ENCODE measurements at regions of chr15 and their contacts with region 1.

Region 1: DNA sequence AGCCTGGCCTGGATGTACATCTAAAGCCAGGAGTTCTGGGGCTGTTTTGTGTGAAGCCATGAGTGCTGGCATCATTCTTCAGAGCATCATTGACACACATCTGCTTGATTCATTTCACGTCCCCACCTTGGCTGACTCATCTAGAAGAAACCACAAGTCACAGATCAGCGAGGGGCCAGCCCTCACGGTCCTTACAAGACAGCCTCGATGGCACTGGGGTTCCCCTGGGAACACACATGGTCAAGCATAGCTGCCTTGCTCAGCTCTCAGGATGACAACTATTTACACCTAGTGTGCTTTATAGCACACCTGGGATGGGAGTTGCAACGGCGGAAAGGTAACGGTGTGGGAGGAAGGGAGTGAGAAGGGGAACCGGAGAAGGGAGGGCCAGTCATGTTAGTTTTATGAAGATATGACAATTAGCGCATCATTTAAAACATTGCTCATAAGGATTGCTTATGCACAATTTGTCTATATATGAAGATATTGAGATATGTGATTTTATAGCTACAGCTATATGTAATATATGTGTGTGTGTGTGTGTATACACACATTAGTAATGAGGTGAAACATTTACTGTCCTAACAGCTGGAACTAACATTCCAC is 227.1 kb downstream of the RPLP1 start:
- DNase-seq: peak in 1 of 9 donors; percentile 51
- ATAC-seq: peak; percentile 38
- H3K4me3 ChIP-seq: peak overlapping the region; percentile 23
- H3K4me3 Mint-ChIP-seq: peak overlapping the region in 1 of 10 donors; percentile 34
- H3K27ac ChIP-seq: no peak overlapping the region
- H3K27ac Mint-ChIP-seq: no peak overlapping the region
- H3K4me1 ChIP-seq: peaks cover 0 to 11% of the 10 kb centered on the region in 2 donors
- H3K4me1 Mint-ChIP-seq: peaks cover 0 to 24% (median 3%) of the 10 kb centered on the region in 7 donors
- H3K27me3 ChIP-seq: no peaks in the 10 kb centered on the region
- H3K27me3 Mint-ChIP-seq: peaks cover 0 to 20% (median 5%) of the 10 kb centered on the region in 5 donors

Region 2: GRCh38 chr15:69628371-69629093 is 51.2 kb before region 1 on chr15:
- CTCF ChIA-PET with region 1: no interaction called
- POLR2A ChIA-PET with region 1: no interaction called
- intact Hi-C with region 1: loop called in 1 of 2 experiments (anchors 5 kb)
- DNase-seq: no peak
- ATAC-seq: no peak
- H3K4me3 ChIP-seq: no peak overlapping the region
- H3K4me3 Mint-ChIP-seq: no peak overlapping the region
- H3K27ac ChIP-seq: no peak overlapping the region
- H3K27ac Mint-ChIP-seq: no peak overlapping the region
- H3K4me1 ChIP-seq: no peaks in the 10 kb centered on the region
- H3K4me1 Mint-ChIP-seq: peaks cover 0 to 17% (median 6%) of the 10 kb centered on the region in 7 donors
- H3K27me3 ChIP-seq: no peaks in the 10 kb centered on the region
- H3K27me3 Mint-ChIP-seq: peaks cover 8 to 36% (median 26%) of the 10 kb centered on the region in 5 donors